ENCODE measurements at regions of chr20 and their contacts with region 1.

Region 1: DNA sequence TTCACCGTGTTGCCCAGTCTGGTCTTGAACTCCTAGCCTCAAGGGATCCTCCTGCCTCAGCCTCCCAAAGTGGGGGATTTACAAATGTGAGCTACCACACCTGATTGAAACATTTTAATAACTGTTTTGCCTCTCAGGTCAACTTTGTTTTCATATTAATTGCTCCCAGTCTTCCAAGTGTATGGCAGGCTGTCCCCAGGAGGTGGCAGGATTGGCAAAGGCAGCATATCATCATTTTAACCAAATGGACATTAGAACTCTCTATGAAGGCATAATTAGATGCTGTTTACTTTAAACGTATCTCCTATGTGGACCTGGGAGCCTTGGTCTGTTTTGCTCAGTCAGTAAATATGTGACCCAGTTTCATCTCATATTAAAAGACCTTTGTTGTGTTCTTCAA is 59.2 kb upstream of the CSE1L start:
- DNase-seq: peak; percentile 39
- H3K4me3 ChIP-seq: no peak overlapping the region
- H3K27ac ChIP-seq: no peak overlapping the region
- H3K4me1 ChIP-seq: peaks cover 22% of the 10 kb centered on the region
- H3K27me3 ChIP-seq: no peaks in the 10 kb centered on the region
- CTCF ChIP-seq: peak; percentile 35 to 55
- POLR2A ChIP-seq: no peak

Region 2: DNA sequence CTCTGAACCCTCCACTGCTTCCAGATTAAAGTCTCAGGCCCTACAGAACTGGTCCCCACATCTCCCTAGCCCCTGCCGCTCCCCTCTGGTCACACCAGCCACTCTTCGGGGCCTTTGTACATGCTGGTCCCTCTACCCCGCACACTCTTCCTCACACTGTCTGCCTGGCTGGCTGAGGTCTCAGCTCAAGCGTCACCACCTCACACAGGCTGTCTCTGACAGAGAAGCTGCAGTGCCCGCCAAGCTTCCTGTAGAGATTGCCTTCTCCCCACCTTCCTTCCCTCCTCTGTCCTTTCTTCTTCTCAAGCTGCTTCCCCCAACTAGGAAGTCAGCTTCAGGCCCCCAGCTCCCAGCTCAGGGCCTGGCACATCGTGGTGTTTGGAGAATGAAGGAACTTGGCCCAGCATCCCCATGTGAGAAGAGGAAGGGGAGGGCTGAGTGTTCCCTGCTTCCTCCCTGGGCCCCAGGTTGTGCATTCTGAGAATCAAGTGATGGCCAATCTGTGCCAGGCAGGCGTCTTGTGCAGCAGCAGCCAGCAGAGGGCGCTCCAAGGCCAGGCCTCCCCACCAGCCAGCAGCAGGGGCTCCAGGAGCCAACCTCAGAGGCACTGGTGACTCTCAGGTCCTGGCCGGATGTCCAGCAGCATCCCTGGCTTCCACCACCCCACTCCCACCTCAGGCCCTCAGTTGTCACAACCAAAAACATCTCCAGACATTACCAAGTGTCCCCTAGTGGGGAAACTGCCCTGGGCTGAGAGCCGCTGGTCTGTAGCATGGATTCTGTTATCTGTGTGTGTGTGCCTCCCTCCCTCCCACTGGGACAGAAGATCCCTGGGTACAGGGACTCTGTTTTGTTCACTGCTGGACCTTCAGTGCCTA is 351.2 kb before region 1 on chr20:
- CTCF ChIA-PET with region 1: no interaction called
- POLR2A ChIA-PET with region 1: no interaction called
- dilution Hi-C with region 1: no loop called
- intact Hi-C with region 1: loop called (anchors 5 kb)
- DNase-seq: peak; percentile 55
- H3K4me3 ChIP-seq: no peak overlapping the region
- H3K27ac ChIP-seq: no peak overlapping the region
- H3K4me1 ChIP-seq: peaks cover 23% of the 10 kb centered on the region
- H3K27me3 ChIP-seq: no peaks in the 10 kb centered on the region
- CTCF ChIP-seq: peak; percentile 96 to 97
- POLR2A ChIP-seq: no peak

Region 3: DNA sequence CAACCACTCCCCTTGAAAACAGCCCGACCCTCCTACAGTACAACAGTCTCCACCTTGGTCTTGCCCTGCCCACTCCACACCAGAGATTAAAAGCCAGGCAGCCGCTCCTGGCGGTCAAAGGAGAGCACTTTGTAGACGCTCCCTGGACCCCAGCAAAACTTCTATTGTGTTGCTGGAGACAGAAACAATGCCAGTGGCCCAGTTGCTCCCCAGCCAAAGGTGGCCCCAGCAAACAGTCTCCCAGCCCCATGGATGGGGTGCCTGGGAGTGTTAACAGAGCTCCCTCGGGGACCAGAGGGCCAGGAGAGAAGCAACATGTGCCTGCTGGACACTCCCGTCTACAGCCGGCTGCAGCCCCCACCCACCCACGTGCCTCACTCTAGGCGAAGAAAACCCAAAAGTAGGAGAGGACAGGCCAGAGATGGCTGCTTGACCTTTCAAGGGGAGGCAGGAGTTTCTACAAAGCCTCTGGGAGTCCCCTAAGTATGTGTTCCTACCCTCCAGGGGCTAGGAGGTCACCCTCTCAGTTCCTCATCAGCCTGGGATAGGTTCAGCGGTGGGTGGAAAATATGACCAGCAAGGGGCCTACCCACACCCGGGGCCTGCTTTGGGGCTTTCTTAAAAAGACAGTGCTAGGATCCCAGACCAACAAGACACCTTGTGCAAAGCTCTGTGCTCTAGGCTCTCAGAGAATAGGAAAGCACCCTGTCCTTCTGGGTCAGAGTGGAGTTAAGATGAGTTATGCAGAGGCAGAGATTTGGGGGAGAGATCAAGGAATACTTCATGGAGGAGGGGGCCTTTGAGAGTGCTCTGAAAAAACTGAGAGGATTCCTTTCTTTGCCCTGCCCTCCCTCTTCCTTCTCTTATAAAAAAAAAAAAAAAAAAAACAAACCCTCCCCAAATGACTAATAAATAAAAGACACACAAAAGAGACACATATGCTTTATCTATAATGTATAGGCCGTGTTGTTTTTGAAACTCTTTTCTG is 140.1 kb before region 1 on chr20:
- CTCF ChIA-PET with region 1: no interaction called
- POLR2A ChIA-PET with region 1: no interaction called
- dilution Hi-C with region 1: no loop called
- intact Hi-C with region 1: loop called (anchors 5 kb)
- DNase-seq: peak; percentile 62
- H3K4me3 ChIP-seq: no peak overlapping the region
- H3K27ac ChIP-seq: peak overlapping the region; percentile 51
- H3K4me1 ChIP-seq: peaks cover 40% of the 10 kb centered on the region
- H3K27me3 ChIP-seq: no peaks in the 10 kb centered on the region
- CTCF ChIP-seq: no peak
- POLR2A ChIP-seq: no peak

Region 4: DNA sequence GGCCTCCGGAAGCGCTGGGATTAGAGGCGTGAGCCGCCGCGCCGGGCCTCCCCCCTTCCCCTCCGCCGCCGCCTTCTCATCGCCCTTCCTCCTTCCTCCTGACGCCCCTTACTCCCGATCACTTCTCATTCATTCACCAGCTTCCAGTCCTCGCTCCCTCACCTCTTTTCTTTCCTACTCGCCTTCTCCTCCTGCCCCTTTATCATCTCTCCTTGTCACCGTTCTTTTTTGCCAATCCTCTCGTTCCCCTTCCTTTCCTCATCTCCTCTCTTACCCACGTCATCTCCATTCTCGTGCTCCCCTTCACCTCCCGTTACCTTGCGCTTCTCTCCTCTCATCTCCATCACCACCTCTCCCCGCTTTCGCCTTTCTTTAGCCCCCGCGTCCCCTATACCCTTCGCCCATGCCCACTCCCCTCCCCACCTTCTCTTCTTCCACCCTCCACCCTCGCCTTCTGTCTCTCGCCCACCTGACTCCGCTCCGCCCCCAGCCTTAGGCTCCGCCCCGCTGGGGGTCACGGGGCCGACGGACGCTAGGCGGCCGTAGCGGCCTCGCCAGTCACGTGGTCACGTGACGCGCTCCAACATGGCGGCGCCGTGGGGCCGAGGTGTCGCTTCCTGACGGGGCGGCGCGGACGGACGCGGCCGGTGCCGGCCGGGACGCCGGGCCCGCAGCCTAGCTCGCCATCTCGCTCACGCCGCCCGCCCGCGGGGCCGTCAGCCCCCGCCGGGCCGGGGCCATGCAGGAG is 65.6 kb before region 1 on chr20 and contains the start of gene ARFGEF2:
- CTCF ChIA-PET with region 1: interaction called, 11 read pairs
- POLR2A ChIA-PET with region 1: no interaction called
- dilution Hi-C with region 1: no loop called
- intact Hi-C with region 1: loop called (anchors 1 kb)
- DNase-seq: peak; percentile 93
- H3K4me3 ChIP-seq: peak within 1 kb of the TSS; percentile 56 to 82 (median 78)
- H3K27ac ChIP-seq: peak within 1 kb of the TSS; percentile 94
- H3K4me1 ChIP-seq: peaks cover 25% of the 10 kb centered on the region
- H3K27me3 ChIP-seq: no peaks in the 10 kb centered on the region
- CTCF ChIP-seq: no peak
- POLR2A ChIP-seq: no peak
- total RNA-seq, gene ARFGEF2: 26.1 and 32.6 TPM in 2 replicates

Region 5: GRCh38 chr20:48928832-48929725 is 57.8 kb before region 1 on chr20:
- CTCF ChIA-PET with region 1: interaction called, 8 read pairs
- POLR2A ChIA-PET with region 1: interaction called, 4 read pairs
- dilution Hi-C with region 1: no loop called
- intact Hi-C with region 1: loop called (anchors 1 kb)
- DNase-seq: peak; percentile 91
- H3K4me3 ChIP-seq: peak overlapping the region in 1 of 3 experiments; percentile 41
- H3K27ac ChIP-seq: peak overlapping the region; percentile 92
- H3K4me1 ChIP-seq: peaks cover 51% of the 10 kb centered on the region
- H3K27me3 ChIP-seq: no peaks in the 10 kb centered on the region
- CTCF ChIP-seq: no peak
- POLR2A ChIP-seq: no peak

Region 6: DNA sequence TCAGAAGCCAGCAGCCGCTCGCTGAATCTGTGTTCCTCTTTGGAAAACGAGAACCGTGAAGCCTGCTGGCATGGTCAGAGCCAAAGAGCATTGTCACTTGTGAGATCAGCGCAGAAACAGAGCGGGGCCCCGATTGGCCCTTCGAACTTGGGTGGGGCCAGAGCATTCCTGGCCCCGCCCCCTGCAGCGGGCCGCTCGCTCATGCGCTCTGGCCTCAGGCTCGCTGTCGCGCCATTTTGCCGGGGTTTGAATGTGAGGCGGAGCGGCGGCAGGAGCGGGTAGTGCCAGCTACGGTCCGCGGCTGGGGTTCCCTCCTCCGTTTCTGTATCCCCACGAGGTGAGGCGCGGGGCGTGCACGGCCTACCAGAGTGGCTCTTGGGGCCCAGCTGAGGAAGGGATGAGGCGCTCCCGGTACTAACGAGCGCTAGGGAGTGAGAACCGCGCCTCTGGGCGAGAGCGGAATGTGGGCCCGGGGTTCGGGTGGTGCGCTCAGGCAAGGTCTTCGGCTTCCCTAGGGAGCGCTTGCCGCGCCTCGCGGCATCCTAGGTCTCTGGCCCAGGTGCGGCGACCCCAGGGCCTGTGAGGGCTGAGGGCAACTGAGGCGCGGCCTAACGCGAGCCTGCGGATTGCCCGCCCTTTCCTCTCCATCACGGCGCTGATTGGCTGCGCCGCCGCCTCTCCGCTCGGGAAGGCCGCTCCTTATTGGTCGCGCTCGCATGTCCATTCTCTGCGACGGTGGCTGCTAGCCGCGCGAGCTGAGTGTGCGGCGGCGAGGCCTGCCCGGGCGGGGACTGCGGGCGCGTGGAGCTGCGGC is 59.4 kb after region 1 on chr20 and contains the start of gene CSE1L:
- CTCF ChIA-PET with region 1: no interaction called
- POLR2A ChIA-PET with region 1: no interaction called
- dilution Hi-C with region 1: no loop called
- intact Hi-C with region 1: loop called (anchors 2 kb)
- DNase-seq: peak; percentile 95
- H3K4me3 ChIP-seq: peak within 1 kb of the TSS; percentile 64 to 87 (median 86)
- H3K27ac ChIP-seq: peak within 1 kb of the TSS; percentile 81
- H3K4me1 ChIP-seq: peaks cover 24% of the 10 kb centered on the region
- H3K27me3 ChIP-seq: no peaks in the 10 kb centered on the region
- CTCF ChIP-seq: no peak
- POLR2A ChIP-seq: peak; percentile 95
- total RNA-seq, gene CSE1L: 109 and 118 TPM in 2 replicates

Measured in endothelial cell of umbilical vein (primary cell).